ENCODE measurements at regions of chr2 and their contacts with region 1.

Region 1: GRCh38 chr2:55168221-55169154 is 63.6 kb downstream of the CLHC1 start:
- DNase-seq: peak in 3 of 5 donors; percentile 6 to 44 (median 31)
- H3K4me3 ChIP-seq: no peak overlapping the region
- H3K4me3 Mint-ChIP-seq: no peak overlapping the region
- H3K27ac ChIP-seq: no peak overlapping the region
- H3K27ac Mint-ChIP-seq: no peak overlapping the region
- H3K4me1 ChIP-seq: no peaks in the 10 kb centered on the region
- H3K4me1 Mint-ChIP-seq: peaks cover 0 to 5% (median 0%) of the 10 kb centered on the region in 3 donors
- H3K27me3 ChIP-seq: no peaks in the 10 kb centered on the region
- H3K27me3 Mint-ChIP-seq: no peaks in the 10 kb centered on the region

Region 2: DNA sequence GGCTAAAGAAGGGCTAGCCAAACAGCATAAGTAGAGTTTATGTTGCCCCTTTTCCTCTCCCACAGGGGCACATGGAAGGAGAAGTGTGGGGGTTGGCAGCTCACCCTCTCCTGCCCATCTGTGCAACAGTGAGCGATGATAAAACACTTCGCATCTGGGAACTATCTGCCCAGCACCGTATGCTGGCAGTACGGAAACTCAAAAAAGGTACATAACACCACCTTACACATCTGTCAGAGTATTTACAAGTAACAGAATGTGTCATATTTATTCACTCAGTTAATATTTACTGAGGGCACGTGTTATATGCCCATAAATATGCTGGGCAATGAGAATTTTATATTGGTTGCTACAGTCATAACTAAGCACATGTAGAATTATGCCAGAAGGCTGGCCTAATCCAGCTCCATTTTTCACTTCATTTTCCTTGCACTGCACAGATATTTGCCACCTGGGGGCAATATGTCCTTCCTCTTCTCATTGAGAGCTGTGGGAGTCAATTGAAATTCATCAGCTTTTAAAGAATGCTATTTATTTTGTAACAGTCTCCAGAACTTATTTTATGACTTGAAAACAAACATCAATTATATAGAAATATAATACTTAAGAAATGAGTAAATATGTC is 268.8 kb before region 1 on chr2:
- CTCF ChIA-PET with region 1: interaction called, 14 read pairs
- POLR2A ChIA-PET with region 1: no interaction called
- DNase-seq: peak in 2 of 5 donors; percentile 9 to 10
- H3K4me3 ChIP-seq: no peak overlapping the region
- H3K4me3 Mint-ChIP-seq: no peak overlapping the region
- H3K27ac ChIP-seq: no peak overlapping the region
- H3K27ac Mint-ChIP-seq: no peak overlapping the region
- H3K4me1 ChIP-seq: peaks cover 22% of the 10 kb centered on the region
- H3K4me1 Mint-ChIP-seq: peaks cover 16 to 24% (median 22%) of the 10 kb centered on the region in 3 donors
- H3K27me3 ChIP-seq: no peaks in the 10 kb centered on the region
- H3K27me3 Mint-ChIP-seq: no peaks in the 10 kb centered on the region

Region 3: GRCh38 chr2:55014962-55015939 is 153.2 kb before region 1 on chr2:
- CTCF ChIA-PET with region 1: interaction called, 11 read pairs
- POLR2A ChIA-PET with region 1: no interaction called
- DNase-seq: peak in 3 of 5 donors; percentile 41 to 63 (median 45)
- H3K4me3 ChIP-seq: no peak overlapping the region
- H3K4me3 Mint-ChIP-seq: no peak overlapping the region
- H3K27ac ChIP-seq: no peak overlapping the region
- H3K27ac Mint-ChIP-seq: peak overlapping the region in 1 of 8 donors; percentile 10
- H3K4me1 ChIP-seq: peaks cover 9% of the 10 kb centered on the region
- H3K4me1 Mint-ChIP-seq: peaks cover 52 to 85% (median 80%) of the 10 kb centered on the region in 3 donors
- H3K27me3 ChIP-seq: no peaks in the 10 kb centered on the region
- H3K27me3 Mint-ChIP-seq: no peaks in the 10 kb centered on the region

Measured in CD8-positive, alpha-beta memory T cell (primary cell).